ENCODE measurements at regions of chr2 and their contacts with region 1.

Region 1: DNA sequence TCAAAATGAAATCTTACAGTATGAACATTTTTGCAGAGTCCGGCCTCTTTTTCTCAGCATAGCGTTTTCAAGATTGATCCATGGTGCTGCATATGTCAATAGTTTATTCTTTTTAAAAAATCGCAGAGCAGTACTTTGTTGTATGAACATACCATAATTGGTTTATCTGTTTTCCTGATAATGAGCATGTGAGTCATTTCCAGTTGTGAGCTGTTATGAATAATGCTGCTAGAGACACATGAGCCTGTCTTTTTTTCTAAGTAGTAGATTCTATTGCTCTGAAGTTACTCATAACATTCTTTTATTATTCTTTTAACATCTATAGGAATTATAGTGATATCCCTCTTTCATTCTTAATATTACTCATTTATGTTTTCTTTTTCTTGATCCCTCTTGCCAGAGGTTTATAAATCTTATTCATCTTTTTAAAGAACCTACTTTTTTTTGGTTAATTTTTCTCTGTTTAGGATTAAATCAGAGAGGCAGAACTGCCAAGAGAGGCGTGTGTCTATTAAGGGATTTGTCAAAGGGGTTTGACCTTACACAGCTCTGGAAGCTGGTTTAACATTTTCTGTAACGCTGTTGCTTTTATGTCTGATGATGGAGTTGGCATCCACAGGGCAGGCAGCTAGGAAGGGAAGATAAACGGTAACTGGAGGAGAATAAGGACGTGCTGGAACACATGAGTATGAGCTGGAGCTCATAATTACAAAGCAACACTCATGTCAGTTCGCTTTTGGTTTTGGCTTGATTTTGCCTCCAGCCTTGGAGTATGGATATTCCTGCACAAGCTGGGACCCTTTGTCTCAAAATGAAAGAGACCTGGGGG is 47.4 kb downstream of the MGAT5 start:
- DNase-seq: no peak
- H3K4me3 Mint-ChIP-seq: no peak overlapping the region
- H3K27ac Mint-ChIP-seq: no peak overlapping the region
- H3K4me1 Mint-ChIP-seq: peaks cover 48% of the 10 kb centered on the region
- H3K27me3 Mint-ChIP-seq: no peaks in the 10 kb centered on the region

Region 2: GRCh38 chr2:134290358-134290757 is 11.0 kb before region 1 on chr2:
- CTCF ChIA-PET with region 1: interaction called, 14 read pairs
- POLR2A ChIA-PET with region 1: no interaction called
- DNase-seq: peak; percentile 19
- H3K4me3 Mint-ChIP-seq: no peak overlapping the region
- H3K27ac Mint-ChIP-seq: no peak overlapping the region
- H3K4me1 Mint-ChIP-seq: peaks cover 34% of the 10 kb centered on the region
- H3K27me3 Mint-ChIP-seq: no peaks in the 10 kb centered on the region

Region 3: GRCh38 chr2:134312482-134312881 is 11.2 kb after region 1 on chr2:
- CTCF ChIA-PET with region 1: no interaction called
- POLR2A ChIA-PET with region 1: no interaction called
- DNase-seq: no peak
- H3K4me3 Mint-ChIP-seq: no peak overlapping the region
- H3K27ac Mint-ChIP-seq: no peak overlapping the region
- H3K4me1 Mint-ChIP-seq: peaks cover 38% of the 10 kb centered on the region
- H3K27me3 Mint-ChIP-seq: no peaks in the 10 kb centered on the region